Activated B cell treated with CpG ODN at 0.5 μM for 24 hours (primary cell): ENCODE measurements at regions of chr7 and their contacts with region 1.

Region 1: GRCh38 chr7:22860784-22861482 is 38.3 kb upstream of the TOMM7 start:
- DNase-seq: no peak
- ATAC-seq: peak; percentile 64
- H3K4me3 Mint-ChIP-seq: no peak overlapping the region
- H3K27ac Mint-ChIP-seq: no peak overlapping the region
- H3K4me1 Mint-ChIP-seq: peaks cover 63% of the 10 kb centered on the region
- H3K27me3 Mint-ChIP-seq: no peaks in the 10 kb centered on the region
- CTCF ChIP-seq: no peak

Region 2: GRCh38 chr7:22791204-22792158 is 69.5 kb before region 1 on chr7:
- CTCF ChIA-PET with region 1: no interaction called
- POLR2A ChIA-PET with region 1: no interaction called
- intact Hi-C with region 1: no loop called
- DNase-seq: no peak
- ATAC-seq: no peak
- H3K4me3 Mint-ChIP-seq: no peak overlapping the region
- H3K27ac Mint-ChIP-seq: no peak overlapping the region
- H3K4me1 Mint-ChIP-seq: no peaks in the 10 kb centered on the region
- H3K27me3 Mint-ChIP-seq: no peaks in the 10 kb centered on the region
- CTCF ChIP-seq: no peak

Region 3: DNA sequence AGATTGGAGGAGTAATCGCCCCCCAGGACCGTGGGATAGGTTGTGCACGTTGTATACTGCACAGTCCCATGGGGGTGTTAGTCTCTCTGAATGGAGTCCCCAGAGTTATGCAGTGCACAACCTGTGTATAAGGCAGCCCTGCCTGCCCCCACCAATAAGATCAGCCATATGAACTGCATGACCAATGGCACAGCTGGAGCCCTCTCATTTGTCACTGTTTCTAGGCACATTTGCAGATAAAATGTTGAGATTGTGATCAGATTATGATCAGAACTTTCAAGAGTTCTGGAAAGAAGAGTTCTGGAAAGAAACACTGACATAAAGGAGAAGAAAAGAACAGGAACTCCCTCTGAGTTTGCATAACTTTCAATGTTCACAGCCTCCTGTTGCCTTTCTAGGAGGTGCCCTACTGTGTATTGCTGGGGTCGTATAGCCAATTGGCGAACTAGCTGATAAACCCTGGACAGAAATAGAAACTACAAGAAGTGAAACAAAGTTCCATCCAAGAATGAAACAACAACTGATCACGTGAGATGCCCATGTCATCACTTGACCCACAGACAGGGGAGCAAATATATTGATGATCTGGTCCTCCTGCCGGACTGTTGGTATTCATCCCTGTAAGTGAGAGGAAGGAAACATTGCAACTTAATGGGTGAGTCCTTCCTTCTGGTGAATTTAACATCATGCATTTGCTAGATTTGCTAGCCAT is 11.3 kb after region 1 on chr7:
- CTCF ChIA-PET with region 1: interaction called, 3 read pairs
- POLR2A ChIA-PET with region 1: interaction called, 15 read pairs
- intact Hi-C with region 1: loop called (anchors 1 kb)
- DNase-seq: peak; percentile 21
- ATAC-seq: peak; percentile 94
- H3K4me3 Mint-ChIP-seq: peak overlapping the region; percentile 77
- H3K27ac Mint-ChIP-seq: peak overlapping the region; percentile 32
- H3K4me1 Mint-ChIP-seq: peaks cover 35% of the 10 kb centered on the region
- H3K27me3 Mint-ChIP-seq: no peaks in the 10 kb centered on the region
- CTCF ChIP-seq: no peak

Region 4: DNA sequence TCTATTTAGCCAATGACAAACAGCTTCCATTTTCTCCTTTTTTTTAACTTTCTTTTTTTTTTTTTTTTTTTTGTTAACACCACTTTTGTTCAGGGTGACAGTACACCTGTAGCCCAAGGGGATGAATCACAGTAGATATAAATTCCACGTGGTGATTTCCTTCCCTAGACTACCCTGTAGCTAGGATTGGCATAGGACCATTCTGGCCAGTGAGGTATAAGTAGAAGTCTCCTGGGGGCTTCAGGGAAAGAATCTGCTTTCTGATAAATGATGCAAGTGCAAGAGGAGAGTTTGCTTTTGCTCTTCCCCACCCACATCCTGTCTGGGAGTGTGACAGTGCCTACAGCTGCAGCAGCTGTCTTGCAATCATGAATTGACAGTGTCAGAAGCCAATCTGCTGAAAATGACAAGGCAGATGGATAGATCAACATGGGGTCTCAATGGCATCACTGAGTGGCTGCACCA is 24.9 kb after region 1 on chr7:
- CTCF ChIA-PET with region 1: interaction called, 3 read pairs
- POLR2A ChIA-PET with region 1: interaction called, 6 read pairs
- intact Hi-C with region 1: loop called (anchors 1 kb)
- DNase-seq: no peak
- ATAC-seq: peak; percentile 84
- H3K4me3 Mint-ChIP-seq: peak overlapping the region; percentile 39
- H3K27ac Mint-ChIP-seq: peak overlapping the region; percentile 84
- H3K4me1 Mint-ChIP-seq: peaks cover 18% of the 10 kb centered on the region
- H3K27me3 Mint-ChIP-seq: no peaks in the 10 kb centered on the region
- CTCF ChIP-seq: no peak

Region 5: DNA sequence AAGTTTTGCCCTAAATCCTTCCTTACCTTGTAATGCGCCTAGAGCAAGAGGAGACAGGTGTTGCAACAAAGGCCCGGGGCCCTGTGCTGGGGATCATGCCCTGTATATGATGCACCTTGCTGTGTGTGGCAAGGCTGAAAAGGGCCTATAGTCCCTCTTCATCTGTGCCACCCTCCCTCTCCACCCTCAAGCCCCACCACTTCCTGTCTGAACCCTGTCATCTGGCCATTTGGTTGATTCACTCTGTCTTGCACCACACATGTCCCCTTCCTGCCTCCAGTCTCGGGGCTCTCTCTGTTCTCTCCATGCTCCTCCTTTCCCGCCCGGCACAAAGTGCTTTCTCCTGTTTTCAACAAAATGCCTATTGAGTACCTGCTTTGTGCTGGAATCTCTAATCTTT is 426.7 kb after region 1 on chr7:
- CTCF ChIA-PET with region 1: no interaction called
- POLR2A ChIA-PET with region 1: no interaction called
- intact Hi-C with region 1: no loop called
- DNase-seq: no peak
- ATAC-seq: no peak
- H3K4me3 Mint-ChIP-seq: no peak overlapping the region
- H3K27ac Mint-ChIP-seq: no peak overlapping the region
- H3K4me1 Mint-ChIP-seq: no peaks in the 10 kb centered on the region
- H3K27me3 Mint-ChIP-seq: no peaks in the 10 kb centered on the region
- CTCF ChIP-seq: no peak